ENCODE measurements at regions of chr7 and their contacts with region 1.

Region 1: GRCh38 chr7:116122972-116123595 is 87.3 kb upstream of the TES start:
- DNase-seq: peak in 1 of 2 experiments; percentile 44
- H3K4me3 ChIP-seq: no peak overlapping the region
- H3K4me3 Mint-ChIP-seq: no peak overlapping the region
- H3K27ac Mint-ChIP-seq: no peak overlapping the region
- H3K4me1 ChIP-seq: 0 out of 2 replicates have a peak, but pooled peaks cover 7% of the 10 kb centered on the region
- H3K4me1 Mint-ChIP-seq: no peaks in the 10 kb centered on the region
- H3K27me3 ChIP-seq: no peaks in the 10 kb centered on the region
- H3K27me3 Mint-ChIP-seq: no peaks in the 10 kb centered on the region
- CTCF ChIP-seq: peak; percentile 67 to 84

Region 2: GRCh38 chr7:115707258-115708012 is 415.6 kb before region 1 on chr7:
- CTCF ChIA-PET with region 1: no interaction called
- POLR2A ChIA-PET with region 1: no interaction called
- intact Hi-C with region 1: loop called (anchors 10 kb)
- DNase-seq: peak; percentile 38 to 47
- H3K4me3 ChIP-seq: no peak overlapping the region
- H3K4me3 Mint-ChIP-seq: no peak overlapping the region
- H3K27ac Mint-ChIP-seq: peak overlapping the region; percentile 62
- H3K4me1 ChIP-seq: no peaks in the 10 kb centered on the region
- H3K4me1 Mint-ChIP-seq: no peaks in the 10 kb centered on the region
- H3K27me3 ChIP-seq: no peaks in the 10 kb centered on the region
- H3K27me3 Mint-ChIP-seq: peaks cover 6% of the 10 kb centered on the region
- CTCF ChIP-seq: peak; percentile 44 to 51

Region 3: DNA sequence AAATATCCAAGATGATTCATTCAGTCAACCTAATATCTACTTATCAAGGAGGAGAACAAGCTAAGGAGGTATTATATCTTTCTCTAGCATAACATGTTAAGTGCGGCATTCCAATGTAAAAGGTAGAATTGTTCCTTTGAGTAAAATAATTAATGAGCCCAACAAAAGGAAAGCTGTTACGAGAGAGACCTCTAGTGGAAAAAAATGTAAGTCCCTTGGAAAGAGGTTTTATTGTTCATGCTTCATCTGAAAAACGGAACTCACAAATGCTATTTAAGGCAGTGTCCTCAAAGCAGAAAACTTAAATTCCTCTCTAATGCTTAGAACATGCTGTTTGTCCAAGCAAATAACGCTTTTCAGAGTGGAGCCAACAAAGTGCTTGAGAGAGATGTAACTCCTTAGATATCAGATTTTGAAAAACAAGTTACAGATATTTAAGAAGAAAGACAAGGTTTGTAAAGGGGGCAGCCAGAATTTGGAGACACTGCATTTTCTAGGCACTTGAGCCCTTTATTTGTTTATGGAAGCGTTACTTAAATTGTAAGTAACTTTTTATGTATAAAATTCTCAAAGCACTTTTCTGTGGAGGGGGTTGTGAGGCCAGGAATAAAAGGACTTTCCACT is 212.4 kb before region 1 on chr7:
- CTCF ChIA-PET with region 1: no interaction called
- POLR2A ChIA-PET with region 1: no interaction called
- intact Hi-C with region 1: loop called (anchors 1 kb)
- DNase-seq: peak in 1 of 2 experiments; percentile 25
- H3K4me3 ChIP-seq: no peak overlapping the region
- H3K4me3 Mint-ChIP-seq: no peak overlapping the region
- H3K27ac Mint-ChIP-seq: no peak overlapping the region
- H3K4me1 ChIP-seq: no peaks in the 10 kb centered on the region
- H3K4me1 Mint-ChIP-seq: peaks cover 5% of the 10 kb centered on the region
- H3K27me3 ChIP-seq: no peaks in the 10 kb centered on the region
- H3K27me3 Mint-ChIP-seq: no peaks in the 10 kb centered on the region
- CTCF ChIP-seq: peak; percentile 63 to 69

Region 4: GRCh38 chr7:115971506-115971905 is 151.6 kb before region 1 on chr7:
- CTCF ChIA-PET with region 1: no interaction called
- POLR2A ChIA-PET with region 1: no interaction called
- intact Hi-C with region 1: loop called (anchors 2 kb)
- DNase-seq: no peak
- H3K4me3 ChIP-seq: no peak overlapping the region
- H3K4me3 Mint-ChIP-seq: no peak overlapping the region
- H3K27ac Mint-ChIP-seq: peak overlapping the region; percentile 45
- H3K4me1 ChIP-seq: peaks cover 84% of the 10 kb centered on the region
- H3K4me1 Mint-ChIP-seq: peaks cover 48% of the 10 kb centered on the region
- H3K27me3 ChIP-seq: no peaks in the 10 kb centered on the region
- H3K27me3 Mint-ChIP-seq: no peaks in the 10 kb centered on the region
- CTCF ChIP-seq: no peak

Region 5: GRCh38 chr7:116195451-116195850 is 72.4 kb after region 1 on chr7:
- CTCF ChIA-PET with region 1: no interaction called
- POLR2A ChIA-PET with region 1: no interaction called
- intact Hi-C with region 1: no loop called
- DNase-seq: no peak
- H3K4me3 ChIP-seq: no peak overlapping the region
- H3K4me3 Mint-ChIP-seq: no peak overlapping the region
- H3K27ac Mint-ChIP-seq: no peak overlapping the region
- H3K4me1 ChIP-seq: peaks cover 8% of the 10 kb centered on the region; the same call in 1 of the 2 replicates
- H3K4me1 Mint-ChIP-seq: peaks cover 13% of the 10 kb centered on the region
- H3K27me3 ChIP-seq: no peaks in the 10 kb centered on the region
- H3K27me3 Mint-ChIP-seq: no peaks in the 10 kb centered on the region
- CTCF ChIP-seq: no peak

Region 6: GRCh38 chr7:116511552-116512519 is 388.8 kb after region 1 on chr7:
- CTCF ChIA-PET with region 1: no interaction called
- POLR2A ChIA-PET with region 1: no interaction called
- intact Hi-C with region 1: no loop called
- DNase-seq: no peak
- H3K4me3 ChIP-seq: peak overlapping the region; percentile 21
- H3K4me3 Mint-ChIP-seq: peak overlapping the region; percentile 69
- H3K27ac Mint-ChIP-seq: no peak overlapping the region
- H3K4me1 ChIP-seq: peaks cover 7% of the 10 kb centered on the region
- H3K4me1 Mint-ChIP-seq: peaks cover 23% of the 10 kb centered on the region
- H3K27me3 ChIP-seq: no peaks in the 10 kb centered on the region
- H3K27me3 Mint-ChIP-seq: no peaks in the 10 kb centered on the region
- CTCF ChIP-seq: no peak